PC-3 (cell line): ENCODE measurements at regions of chr6 and their contacts with region 1.

Region 1: DNA sequence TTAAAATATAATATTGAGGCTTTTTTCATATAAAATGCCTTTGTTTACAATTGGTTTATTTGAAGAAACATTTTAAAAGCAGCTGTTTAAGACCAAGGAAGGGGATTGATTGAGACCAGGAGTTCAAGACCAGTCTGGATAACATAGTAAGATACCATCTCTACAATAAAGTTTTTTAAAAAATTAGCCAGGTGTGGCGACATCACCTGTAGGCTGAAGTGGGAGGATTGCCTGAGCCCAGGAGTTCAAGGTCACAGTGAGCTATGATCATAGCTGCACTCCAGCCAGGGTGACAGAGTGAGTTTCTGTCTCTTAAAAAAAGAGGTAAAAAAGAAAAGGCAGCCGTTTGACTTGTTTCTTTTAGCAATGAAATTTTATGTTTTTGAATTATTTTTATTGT is 117.0 kb downstream of the STXBP5 start:
- DNase-seq: no peak
- ATAC-seq: no peak
- H3K4me3 ChIP-seq: no peak overlapping the region
- H3K27ac ChIP-seq: no peak overlapping the region
- H3K4me1 ChIP-seq: no peaks in the 10 kb centered on the region
- H3K27me3 ChIP-seq: no peaks in the 10 kb centered on the region
- CTCF ChIP-seq: no peak

Region 2: GRCh38 chr6:146990821-146991798 is 330.1 kb before region 1 on chr6:
- CTCF ChIA-PET with region 1: no interaction called
- POLR2A ChIA-PET with region 1: no interaction called
- intact Hi-C with region 1: no loop called
- DNase-seq: peak; percentile 67
- ATAC-seq: peak; percentile 67
- H3K4me3 ChIP-seq: no peak overlapping the region
- H3K27ac ChIP-seq: 0 out of 2 replicates have a peak overlapping the region, but pooled peaks have one; percentile 21
- H3K4me1 ChIP-seq: peaks cover 13% of the 10 kb centered on the region
- H3K27me3 ChIP-seq: no peaks in the 10 kb centered on the region
- CTCF ChIP-seq: no peak

Region 3: GRCh38 chr6:147255948-147256674 is 65.1 kb before region 1 on chr6:
- CTCF ChIA-PET with region 1: no interaction called
- POLR2A ChIA-PET with region 1: no interaction called
- intact Hi-C with region 1: no loop called
- DNase-seq: no peak
- ATAC-seq: no peak
- H3K4me3 ChIP-seq: no peak overlapping the region
- H3K27ac ChIP-seq: no peak overlapping the region
- H3K4me1 ChIP-seq: no peaks in the 10 kb centered on the region
- H3K27me3 ChIP-seq: no peaks in the 10 kb centered on the region
- CTCF ChIP-seq: no peak

Region 4: DNA sequence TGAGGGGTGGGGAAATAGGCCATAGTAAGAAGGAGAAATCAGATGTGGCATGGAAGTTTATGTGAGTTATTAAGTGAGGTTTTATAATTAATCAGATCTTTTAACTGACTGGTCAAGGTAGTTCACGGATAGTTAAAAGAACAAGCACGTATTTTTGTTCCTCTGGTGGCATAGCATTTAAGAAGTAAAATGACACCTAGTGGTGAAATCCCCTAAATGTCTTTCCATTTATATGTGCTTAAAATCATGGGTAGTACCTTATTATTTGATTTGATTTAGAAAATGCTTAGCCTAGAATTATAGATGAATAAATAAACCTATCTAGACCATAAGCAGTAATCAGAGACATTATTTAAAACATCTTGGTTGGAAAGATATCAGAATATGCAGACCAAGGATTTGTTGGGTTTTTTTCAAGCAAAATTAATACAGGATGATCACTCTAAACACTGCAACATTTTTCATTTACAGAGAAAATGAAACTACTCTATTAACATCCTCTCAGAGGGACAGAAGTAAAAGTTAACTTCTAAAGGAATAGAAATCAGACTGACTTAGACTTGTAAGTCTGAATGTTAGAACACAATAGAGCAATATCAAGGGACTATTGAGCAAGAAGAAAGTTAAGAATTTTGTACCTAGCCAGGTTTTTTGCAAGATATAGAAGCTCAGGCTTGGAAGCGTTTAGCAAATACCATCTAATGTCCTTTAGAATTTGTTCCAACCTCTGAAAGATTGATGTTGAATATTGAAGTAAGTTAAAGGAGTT is 36.0 kb before region 1 on chr6:
- CTCF ChIA-PET with region 1: interaction called, 15 read pairs
- POLR2A ChIA-PET with region 1: no interaction called
- intact Hi-C with region 1: no loop called
- DNase-seq: peak; percentile 68
- ATAC-seq: peak; percentile 41
- H3K4me3 ChIP-seq: no peak overlapping the region
- H3K27ac ChIP-seq: no peak overlapping the region
- H3K4me1 ChIP-seq: peaks cover 37% of the 10 kb centered on the region
- H3K27me3 ChIP-seq: no peaks in the 10 kb centered on the region
- CTCF ChIP-seq: peak; percentile 68

Region 5: GRCh38 chr6:147382945-147383554 is 61.8 kb after region 1 on chr6:
- CTCF ChIA-PET with region 1: no interaction called
- POLR2A ChIA-PET with region 1: no interaction called
- intact Hi-C with region 1: no loop called
- DNase-seq: peak; percentile 55
- ATAC-seq: peak; percentile 46
- H3K4me3 ChIP-seq: no peak overlapping the region
- H3K27ac ChIP-seq: no peak overlapping the region
- H3K4me1 ChIP-seq: no peaks in the 10 kb centered on the region
- H3K27me3 ChIP-seq: no peaks in the 10 kb centered on the region
- CTCF ChIP-seq: peak; percentile 63

Region 6: GRCh38 chr6:147651249-147652063 is 330.2 kb after region 1 on chr6:
- CTCF ChIA-PET with region 1: no interaction called
- POLR2A ChIA-PET with region 1: no interaction called
- intact Hi-C with region 1: no loop called
- DNase-seq: peak; percentile 4
- ATAC-seq: peak; percentile 48; the same call in 1 of the 2 replicates
- H3K4me3 ChIP-seq: no peak overlapping the region
- H3K27ac ChIP-seq: no peak overlapping the region
- H3K4me1 ChIP-seq: no peaks in the 10 kb centered on the region
- H3K27me3 ChIP-seq: no peaks in the 10 kb centered on the region
- CTCF ChIP-seq: no peak; the same call in 1 of the 2 replicates